ENCODE measurements at regions of chr2 and their contacts with region 1.

Region 1: GRCh38 chr2:239035361-239036078 is 187.6 kb downstream of the TWIST2 start:
- DNase-seq: peak in 5 of 6 donors; percentile 27 to 87 (median 62)
- ATAC-seq: peak; percentile 68 to 91 (median 88)
- H3K4me3 ChIP-seq: no peak overlapping the region
- H3K27ac ChIP-seq: no peak overlapping the region
- H3K4me1 ChIP-seq: no peaks in the 10 kb centered on the region
- H3K27me3 ChIP-seq: no peaks in the 10 kb centered on the region
- CTCF ChIP-seq: peak; percentile 78 to 92 (median 80)

Region 2: DNA sequence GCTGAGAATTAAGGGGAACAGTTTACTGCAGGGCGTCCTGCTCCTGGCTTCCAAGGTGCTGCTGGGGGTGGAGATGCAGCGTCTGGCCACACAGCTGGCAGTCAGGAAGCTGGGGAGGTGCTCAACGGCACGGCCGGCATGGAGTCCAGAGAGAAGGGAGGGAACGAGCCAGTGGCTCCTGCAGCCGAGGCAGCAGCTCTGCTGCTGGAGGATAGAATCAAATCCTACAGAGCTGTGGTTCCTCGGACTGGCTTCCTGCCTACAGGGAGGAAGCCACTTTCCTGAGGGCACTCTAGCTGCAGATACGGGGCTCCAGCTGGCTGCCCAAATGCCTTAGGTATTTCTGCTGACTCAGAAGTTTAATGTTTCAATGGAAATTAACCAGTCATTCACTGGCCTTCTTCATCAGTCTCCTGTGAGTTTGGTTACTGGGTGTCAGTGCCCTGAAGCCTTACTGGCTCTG is 78.6 kb after region 1 on chr2:
- intact Hi-C with region 1: no loop called
- DNase-seq: peak in 2 of 6 donors; percentile 28 to 61
- ATAC-seq: peak in 3 of 4 donors; percentile 19 to 60 (median 40)
- H3K4me3 ChIP-seq: no peak overlapping the region
- H3K27ac ChIP-seq: no peak overlapping the region
- H3K4me1 ChIP-seq: peaks cover 0 to 7% (median 6%) of the 10 kb centered on the region in 3 donors
- H3K27me3 ChIP-seq: no peaks in the 10 kb centered on the region
- CTCF ChIP-seq: no peak

Region 3: DNA sequence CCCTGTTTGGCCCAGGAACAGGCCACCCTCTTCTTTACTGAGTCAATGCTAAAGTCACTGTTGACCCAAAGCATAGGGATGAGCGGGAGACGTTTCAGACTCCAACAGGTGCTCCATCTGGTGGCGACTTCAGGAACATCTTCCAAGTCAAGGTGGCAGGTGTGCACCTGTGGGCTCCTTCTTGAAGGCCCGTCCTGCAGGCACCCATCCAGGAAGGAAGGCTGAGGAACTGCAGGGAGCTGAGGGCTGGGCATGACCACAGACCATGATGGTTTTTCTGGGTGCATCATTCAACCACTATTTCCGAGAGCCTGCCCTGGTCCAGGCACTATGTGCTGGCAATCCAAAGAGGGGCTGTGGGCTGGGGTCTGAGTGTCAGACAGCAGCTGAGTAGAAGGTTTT is 846.8 kb after region 1 on chr2:
- intact Hi-C with region 1: loop called in 1 of 3 experiments (anchors 5 kb)
- DNase-seq: peak in 4 of 6 donors; percentile 39 to 73 (median 61)
- ATAC-seq: peak; percentile 50 to 89 (median 80)
- H3K4me3 ChIP-seq: no peak overlapping the region
- H3K27ac ChIP-seq: no peak overlapping the region
- H3K4me1 ChIP-seq: no peaks in the 10 kb centered on the region
- H3K27me3 ChIP-seq: no peaks in the 10 kb centered on the region
- CTCF ChIP-seq: peak; percentile 38 to 67 (median 60)

Region 4: DNA sequence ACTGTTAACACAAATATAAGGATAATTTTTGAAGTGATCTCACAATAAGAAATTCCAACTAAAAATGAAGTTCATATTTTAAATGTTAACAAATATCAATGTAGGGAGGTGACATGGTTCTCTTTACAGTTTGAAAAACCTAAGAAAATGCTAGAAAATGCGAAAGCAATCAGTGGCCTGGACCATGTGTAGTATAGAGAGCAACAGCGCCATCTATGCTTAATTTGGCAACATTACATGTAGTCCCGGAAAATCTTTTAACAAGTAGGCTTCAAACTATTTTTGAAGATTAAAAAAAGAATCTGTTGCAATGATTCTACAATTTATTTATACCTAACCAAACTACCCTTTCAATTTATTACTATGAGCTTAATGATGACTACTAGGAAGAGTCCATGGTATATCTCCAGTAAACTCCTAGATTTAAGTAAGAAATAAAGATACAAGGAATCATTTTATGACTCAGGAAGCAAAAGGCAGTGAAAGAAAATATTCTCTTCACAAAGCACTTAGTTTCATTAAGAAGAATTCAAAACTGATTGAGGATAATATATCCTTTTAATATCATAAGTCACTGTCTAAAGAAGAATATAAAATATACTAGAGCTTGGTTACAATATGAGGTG is 956.3 kb after region 1 on chr2:
- intact Hi-C with region 1: loop called in 2 of 3 experiments (anchors 5 to 10 kb)
- DNase-seq: no peak
- ATAC-seq: peak in 3 of 4 donors; percentile 77 to 88 (median 78)
- H3K4me3 ChIP-seq: no peak overlapping the region
- H3K27ac ChIP-seq: no peak overlapping the region
- H3K4me1 ChIP-seq: no peaks in the 10 kb centered on the region
- H3K27me3 ChIP-seq: no peaks in the 10 kb centered on the region
- CTCF ChIP-seq: peak; percentile 61 to 70 (median 64)

Region 5: GRCh38 chr2:240143801-240144648 is 1108.5 kb after region 1 on chr2:
- intact Hi-C with region 1: loop called in 1 of 3 experiments (anchors 10 kb)
- DNase-seq: peak; percentile 44 to 93 (median 79)
- ATAC-seq: peak; percentile 71 to 98 (median 94)
- H3K4me3 ChIP-seq: no peak overlapping the region
- H3K27ac ChIP-seq: no peak overlapping the region
- H3K4me1 ChIP-seq: no peaks in the 10 kb centered on the region
- H3K27me3 ChIP-seq: no peaks in the 10 kb centered on the region
- CTCF ChIP-seq: peak; percentile 87 to 95 (median 90)

Measured in pancreas (tissue), 10 donors.